Transverse colon (tissue), 4 donors: ENCODE measurements at regions of chr17 and their contacts with region 1.

Region 1: DNA sequence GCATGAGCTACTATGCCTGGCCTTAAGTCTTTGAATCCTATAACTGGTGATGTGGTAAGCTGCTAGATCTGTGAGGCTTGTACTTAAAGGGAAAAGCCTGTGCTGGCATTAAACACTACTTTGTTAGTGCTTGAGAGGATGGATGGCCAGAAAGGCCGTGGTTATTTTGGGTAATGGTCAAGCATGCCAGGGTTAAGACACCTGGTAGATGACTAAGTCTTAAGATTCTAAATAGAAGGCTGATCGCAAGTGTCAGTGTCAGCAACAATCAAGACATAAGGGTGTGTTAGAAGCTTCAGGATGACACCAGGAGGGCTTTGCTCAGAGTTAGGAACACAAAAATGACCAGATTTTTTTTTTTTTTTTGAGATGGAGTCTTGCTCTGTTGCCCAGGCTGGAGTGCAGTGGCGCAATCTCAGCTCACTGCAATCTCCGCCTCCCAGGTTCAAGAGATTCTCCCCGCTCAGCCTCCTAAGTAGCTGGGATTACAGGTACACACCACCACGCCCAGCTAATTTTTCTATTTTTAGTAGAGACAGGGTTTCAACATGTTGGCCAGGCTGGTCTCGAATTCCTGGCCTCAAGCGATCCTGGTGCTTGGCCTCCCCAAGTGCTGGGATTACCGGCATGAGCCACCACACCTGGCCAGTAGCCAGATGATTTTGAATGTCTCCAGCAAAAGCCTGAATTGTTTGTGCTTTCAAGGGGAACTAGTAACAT is 41.6 kb upstream of the MARCHF10 start:
- DNase-seq: no peak
- H3K4me3 ChIP-seq: no peak overlapping the region
- H3K27ac ChIP-seq: no peak overlapping the region
- H3K4me1 ChIP-seq: no peaks in the 10 kb centered on the region
- H3K27me3 ChIP-seq: no peaks in the 10 kb centered on the region
- CTCF ChIP-seq: no peak
- EP300 ChIP-seq: no peak
- POLR2A ChIP-seq: no peak

Region 2: DNA sequence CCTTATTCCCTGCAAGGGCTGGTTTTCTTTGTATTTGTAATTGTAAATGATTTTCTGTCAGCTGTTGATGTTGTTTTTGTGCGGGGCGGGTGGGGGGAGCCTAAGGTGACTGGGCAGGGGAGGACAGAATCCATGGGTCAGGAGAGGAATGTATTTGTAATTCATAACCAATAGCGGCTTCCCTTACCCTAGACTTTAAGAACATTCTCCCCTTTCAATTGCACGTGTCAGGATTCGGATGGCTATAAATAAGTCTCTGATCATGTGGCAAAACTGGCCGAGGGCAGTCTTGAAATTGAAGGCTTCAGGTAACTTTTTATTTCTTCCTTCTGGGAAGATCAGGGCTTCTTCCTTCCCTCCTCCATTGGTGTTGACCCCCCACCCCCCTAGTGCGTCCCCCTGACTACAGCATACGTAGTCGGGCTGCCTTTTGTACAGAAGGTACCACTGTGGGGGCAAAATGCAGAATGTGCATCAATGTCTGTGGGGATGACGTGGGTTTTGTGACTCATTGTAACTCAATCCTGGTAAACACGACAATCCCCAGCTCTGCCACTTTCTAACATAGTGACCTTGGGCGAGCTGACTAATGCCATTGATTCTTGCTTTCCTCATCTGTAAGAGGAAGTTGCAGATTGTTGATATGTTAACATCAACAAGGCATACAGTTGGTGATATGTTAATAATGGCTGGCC is 57.9 kb before region 1 on chr17:
- in situ Hi-C with region 1: no loop called
- intact Hi-C with region 1: no loop called
- DNase-seq: no peak
- H3K4me3 ChIP-seq: no peak overlapping the region
- H3K27ac ChIP-seq: no peak overlapping the region
- H3K4me1 ChIP-seq: peaks cover 0 to 4% (median 0%) of the 10 kb centered on the region in 4 donors
- H3K27me3 ChIP-seq: no peaks in the 10 kb centered on the region
- CTCF ChIP-seq: no peak
- EP300 ChIP-seq: no peak
- POLR2A ChIP-seq: no peak

Region 3: GRCh38 chr17:63349478-63350000 is 499.8 kb after region 1 on chr17:
- in situ Hi-C with region 1: no loop called
- intact Hi-C with region 1: loop called (anchors 10 kb)
- DNase-seq: no peak
- H3K4me3 ChIP-seq: no peak overlapping the region
- H3K27ac ChIP-seq: no peak overlapping the region
- H3K4me1 ChIP-seq: peaks cover 0 to 6% (median 2%) of the 10 kb centered on the region in 4 donors
- H3K27me3 ChIP-seq: no peaks in the 10 kb centered on the region
- CTCF ChIP-seq: no peak
- EP300 ChIP-seq: no peak
- POLR2A ChIP-seq: no peak